AG04449 (cell line): ENCODE measurements at regions of chr1 and their contacts with region 1.

Region 1: DNA sequence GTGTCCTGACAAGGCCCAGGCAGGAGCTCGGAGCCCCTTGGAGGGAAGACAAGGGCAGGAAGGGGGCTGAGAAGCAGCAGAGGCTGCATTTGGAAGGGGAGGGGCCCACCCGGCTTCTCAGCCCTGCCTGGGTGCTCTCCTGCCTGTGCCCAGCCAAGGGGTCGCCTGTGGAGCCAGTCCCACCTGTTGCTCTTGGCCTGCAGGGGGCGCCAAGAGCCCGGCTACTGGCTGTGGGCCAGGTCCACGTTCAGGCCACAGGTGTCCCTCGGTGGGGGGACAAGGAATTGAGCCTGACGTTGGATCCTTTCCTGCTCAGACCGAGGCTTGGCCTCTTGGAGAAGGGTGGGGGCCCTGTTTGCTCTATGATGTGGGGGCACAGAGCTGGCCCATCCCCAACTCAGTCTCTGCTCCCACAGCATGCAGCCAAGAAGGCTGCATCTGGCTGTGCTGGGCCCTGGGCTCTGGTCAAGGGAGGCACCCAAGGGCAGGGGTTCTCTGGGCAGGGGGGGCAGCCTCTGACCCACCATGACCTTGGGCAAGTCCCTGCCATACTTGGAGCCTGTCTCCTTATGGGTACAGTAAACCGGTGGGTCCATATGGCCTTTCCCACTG is 10.9 kb downstream of the WNT4 start:
- DNase-seq: no peak
- H3K4me3 ChIP-seq: no peak overlapping the region
- CTCF ChIP-seq: peak; percentile 61

Region 2: GRCh38 chr1:22121411-22121911 is 10.5 kb before region 1 on chr1:
- CTCF ChIA-PET with region 1: interaction called, 13 read pairs
- POLR2A ChIA-PET with region 1: interaction called, 3 read pairs
- DNase-seq: no peak
- H3K4me3 ChIP-seq: no peak overlapping the region
- CTCF ChIP-seq: no peak